Ascending aorta (tissue), 2 donors: ENCODE measurements at regions of chr2 and their contacts with region 1.

Region 1: DNA sequence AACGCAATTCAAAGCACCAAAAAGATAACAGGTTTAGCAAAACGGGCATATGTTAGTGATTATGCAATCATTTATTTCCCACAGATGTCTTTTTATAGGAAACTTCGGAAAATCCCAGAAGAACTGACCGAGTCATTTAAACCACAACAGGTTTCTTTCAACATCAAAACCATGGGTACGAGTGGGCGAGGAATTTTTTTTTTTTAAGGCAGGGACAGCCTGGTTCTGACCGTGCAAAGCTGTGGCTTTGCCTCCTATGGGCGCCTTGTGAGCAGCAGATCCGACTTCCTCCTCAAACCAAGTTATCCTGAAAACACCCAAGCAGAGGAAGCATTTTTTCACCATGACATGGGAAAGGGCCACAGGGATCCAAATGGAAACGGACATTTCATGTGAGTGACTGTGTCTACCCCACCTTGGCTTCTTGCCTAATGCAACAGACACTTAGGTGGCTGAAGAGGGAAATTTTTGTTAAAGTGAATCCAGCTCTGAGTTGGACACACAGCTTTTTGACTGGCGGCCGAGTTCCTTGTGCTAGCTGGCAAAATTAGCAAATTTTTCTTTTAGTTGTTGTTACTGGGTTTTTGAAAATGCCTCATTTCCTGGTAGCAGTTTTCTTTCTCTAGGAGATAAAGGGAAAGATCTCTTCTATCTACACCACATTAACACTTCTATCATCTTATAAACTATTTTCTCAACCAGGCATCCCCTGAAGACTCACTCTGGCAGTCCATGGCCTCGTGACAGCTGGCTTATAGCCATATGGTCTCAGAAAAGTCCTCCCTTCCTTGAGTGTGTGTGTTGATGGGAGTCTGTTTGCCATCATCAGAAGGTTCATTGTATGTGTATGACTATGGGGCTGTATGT is 487.4 kb upstream of the ZEB2 start:
- DNase-seq: peak in 1 of 2 donors; percentile 87
- H3K4me3 ChIP-seq: peak overlapping the region in 1 of 2 donors; percentile 46
- H3K27ac ChIP-seq: peak overlapping the region; percentile 82 to 87
- H3K4me1 ChIP-seq: peaks cover 5% of the 10 kb centered on the region in 2 donors
- H3K27me3 ChIP-seq: no peaks in the 10 kb centered on the region
- CTCF ChIP-seq: no peak

Region 2: DNA sequence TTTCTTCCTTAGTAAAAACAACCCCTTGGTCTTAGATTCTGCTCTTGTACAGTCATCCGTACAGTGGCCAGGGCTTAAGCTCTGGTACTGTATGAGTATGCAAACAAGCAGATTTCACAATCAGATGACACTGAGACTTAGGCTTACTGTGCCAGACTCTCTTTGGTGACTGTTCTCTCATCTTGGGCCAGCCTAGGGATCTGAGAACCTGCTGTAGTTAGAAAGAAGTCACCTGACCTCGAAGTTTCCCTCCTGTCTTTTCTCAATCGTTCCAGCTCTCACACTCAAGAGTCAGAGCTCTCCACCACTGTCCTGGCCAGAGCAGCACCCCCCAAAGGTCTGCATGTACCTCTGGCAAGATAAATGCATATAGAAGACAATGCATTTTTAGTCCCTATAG is 550.6 kb before region 1 on chr2:
- intact Hi-C with region 1: loop called (anchors 10 kb)
- DNase-seq: peak in 1 of 2 donors; percentile 70
- H3K4me3 ChIP-seq: no peak overlapping the region
- H3K27ac ChIP-seq: peak overlapping the region in 1 of 2 donors; percentile 43
- H3K4me1 ChIP-seq: peaks cover 11 to 63% of the 10 kb centered on the region in 2 donors
- H3K27me3 ChIP-seq: no peaks in the 10 kb centered on the region
- CTCF ChIP-seq: no peak

Region 3: DNA sequence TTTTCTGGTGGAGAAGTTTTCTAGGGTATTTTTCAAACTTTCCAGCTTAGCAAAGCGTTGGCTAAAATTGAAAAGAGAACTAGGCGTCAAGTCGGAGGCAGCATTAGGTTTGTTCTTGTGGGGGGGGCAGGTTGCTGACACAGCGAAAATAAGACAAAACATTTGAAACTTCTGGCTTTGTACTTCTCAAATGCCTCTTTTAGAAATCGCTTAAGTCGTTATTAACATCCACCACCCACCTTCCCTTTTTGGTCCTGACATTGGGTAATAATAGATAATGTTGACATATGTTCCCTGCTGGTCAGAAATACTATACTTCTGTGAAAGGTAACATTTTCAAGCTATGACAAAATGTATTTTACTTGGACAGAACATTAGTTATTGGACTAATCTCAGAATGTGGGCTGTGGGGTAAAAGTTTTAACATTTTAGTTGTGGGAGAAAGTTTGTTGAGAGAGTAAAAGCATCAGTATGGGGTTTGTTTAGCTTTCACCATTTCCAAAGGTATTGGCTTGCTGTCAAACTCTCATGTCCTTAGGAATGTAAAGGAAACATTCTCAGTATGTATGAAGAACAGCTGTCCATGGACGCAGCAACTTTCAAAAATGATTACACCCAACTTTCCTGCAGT is 399.3 kb before region 1 on chr2:
- intact Hi-C with region 1: loop called (anchors 10 kb)
- DNase-seq: no peak
- H3K4me3 ChIP-seq: peak overlapping the region in 1 of 2 donors; percentile 25
- H3K27ac ChIP-seq: peak overlapping the region; percentile 51 to 62
- H3K4me1 ChIP-seq: peaks cover 0 to 6% of the 10 kb centered on the region in 2 donors
- H3K27me3 ChIP-seq: no peaks in the 10 kb centered on the region
- CTCF ChIP-seq: no peak

Region 4: GRCh38 chr2:144712550-144712940 is 294.8 kb before region 1 on chr2:
- intact Hi-C with region 1: no loop called
- DNase-seq: no peak
- H3K4me3 ChIP-seq: no peak overlapping the region
- H3K27ac ChIP-seq: peak overlapping the region; percentile 43 to 65
- H3K4me1 ChIP-seq: peaks cover 0 to 5% of the 10 kb centered on the region in 2 donors
- H3K27me3 ChIP-seq: no peaks in the 10 kb centered on the region
- CTCF ChIP-seq: no peak

Region 5: GRCh38 chr2:145038041-145038525 is 30.8 kb after region 1 on chr2:
- intact Hi-C with region 1: no loop called
- DNase-seq: no peak
- H3K4me3 ChIP-seq: no peak overlapping the region
- H3K27ac ChIP-seq: peak overlapping the region; percentile 29 to 38
- H3K4me1 ChIP-seq: peaks cover 0 to 3% of the 10 kb centered on the region in 2 donors
- H3K27me3 ChIP-seq: no peaks in the 10 kb centered on the region
- CTCF ChIP-seq: no peak

Region 6: DNA sequence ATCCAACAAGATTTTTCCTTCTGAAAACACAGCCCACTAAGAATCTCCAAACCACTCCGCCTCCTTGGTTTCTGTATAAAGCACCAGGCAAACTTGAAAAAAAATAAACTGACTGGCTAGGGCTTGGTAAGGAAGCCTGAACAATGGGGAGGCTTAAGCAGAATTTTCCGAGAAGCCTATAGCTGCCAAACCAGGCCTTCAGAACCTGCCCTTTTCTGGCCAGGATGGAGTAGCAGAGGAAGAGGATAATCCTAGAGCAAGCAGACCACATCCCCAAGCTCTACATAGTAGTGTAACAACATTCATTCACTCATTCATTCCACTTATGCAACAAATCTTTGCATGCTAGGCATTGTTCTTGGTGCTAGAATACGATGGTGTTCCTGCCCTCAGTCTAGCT is 42.1 kb after region 1 on chr2:
- intact Hi-C with region 1: no loop called
- DNase-seq: no peak
- H3K4me3 ChIP-seq: no peak overlapping the region
- H3K27ac ChIP-seq: no peak overlapping the region
- H3K4me1 ChIP-seq: no peaks in the 10 kb centered on the region
- H3K27me3 ChIP-seq: no peaks in the 10 kb centered on the region
- CTCF ChIP-seq: no peak

Region 7: GRCh38 chr2:145481334-145481922 is 474.1 kb after region 1 on chr2:
- intact Hi-C with region 1: no loop called
- DNase-seq: no peak
- H3K4me3 ChIP-seq: no peak overlapping the region
- H3K27ac ChIP-seq: no peak overlapping the region
- H3K4me1 ChIP-seq: no peaks in the 10 kb centered on the region
- H3K27me3 ChIP-seq: no peaks in the 10 kb centered on the region
- CTCF ChIP-seq: no peak

Region 8: GRCh38 chr2:145752091-145752806 is 744.9 kb after region 1 on chr2:
- intact Hi-C with region 1: loop called (anchors 10 kb)
- DNase-seq: peak in 1 of 2 donors; percentile 64
- H3K4me3 ChIP-seq: peak overlapping the region in 1 of 2 donors; percentile 26
- H3K27ac ChIP-seq: peak overlapping the region; percentile 51 to 62
- H3K4me1 ChIP-seq: peaks cover 3 to 21% of the 10 kb centered on the region in 2 donors
- H3K27me3 ChIP-seq: no peaks in the 10 kb centered on the region
- CTCF ChIP-seq: peak; percentile 41 to 71 (median 56)